ENCODE measurements at regions of chr19 and their contacts with region 1.

Region 1: DNA sequence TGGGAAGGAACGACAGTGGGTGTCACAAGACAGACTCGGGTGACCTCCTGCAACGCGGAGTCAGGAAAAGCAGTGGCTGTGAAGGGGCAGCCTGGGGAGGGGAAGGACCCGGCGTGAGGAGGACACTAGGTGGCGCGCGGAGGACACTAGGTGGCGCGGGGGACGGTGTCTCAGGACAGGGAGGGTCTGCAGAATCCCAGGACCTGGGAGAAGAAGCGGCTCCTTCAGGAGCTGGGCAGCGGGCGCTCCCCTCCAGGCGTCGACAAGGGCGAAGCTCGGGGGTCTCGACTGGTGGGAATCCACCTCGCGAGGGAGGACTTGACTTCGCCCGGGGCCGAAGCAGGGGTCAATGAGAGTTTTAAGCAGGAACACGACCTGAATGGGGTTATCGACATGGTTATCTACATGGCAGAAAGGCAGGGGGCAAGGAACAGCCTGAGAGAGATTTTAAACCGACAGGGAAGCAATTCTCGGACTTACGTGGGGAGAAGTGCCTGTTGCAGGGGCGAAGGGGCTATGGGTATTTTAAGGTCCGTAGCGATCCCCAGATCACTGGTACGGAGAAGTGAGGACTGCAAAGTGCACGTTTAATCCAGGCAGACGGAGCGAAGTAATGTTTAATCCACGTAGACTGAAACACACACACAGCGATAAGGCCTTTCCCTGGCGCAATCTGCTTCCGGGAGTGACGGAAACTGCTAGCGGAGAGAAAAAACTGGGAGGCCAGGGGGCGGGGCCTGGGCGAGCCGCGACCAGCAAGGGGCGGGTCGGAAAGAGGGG is at the start of gene ZNF616:
- DNase-seq: peak; percentile 33
- ATAC-seq: peak; percentile 96
- H3K4me3 ChIP-seq: peak within 1 kb of the TSS; percentile 95 to 99
- H3K27ac ChIP-seq: peak within 1 kb of the TSS; percentile 90
- H3K4me1 ChIP-seq: no peaks in the 10 kb centered on the region; the same call in 1 of the 2 replicates
- H3K27me3 ChIP-seq: no peaks in the 10 kb centered on the region
- CTCF ChIP-seq: peak; percentile 89
- total RNA-seq, gene ZNF616: 5.3 TPM

Region 2: DNA sequence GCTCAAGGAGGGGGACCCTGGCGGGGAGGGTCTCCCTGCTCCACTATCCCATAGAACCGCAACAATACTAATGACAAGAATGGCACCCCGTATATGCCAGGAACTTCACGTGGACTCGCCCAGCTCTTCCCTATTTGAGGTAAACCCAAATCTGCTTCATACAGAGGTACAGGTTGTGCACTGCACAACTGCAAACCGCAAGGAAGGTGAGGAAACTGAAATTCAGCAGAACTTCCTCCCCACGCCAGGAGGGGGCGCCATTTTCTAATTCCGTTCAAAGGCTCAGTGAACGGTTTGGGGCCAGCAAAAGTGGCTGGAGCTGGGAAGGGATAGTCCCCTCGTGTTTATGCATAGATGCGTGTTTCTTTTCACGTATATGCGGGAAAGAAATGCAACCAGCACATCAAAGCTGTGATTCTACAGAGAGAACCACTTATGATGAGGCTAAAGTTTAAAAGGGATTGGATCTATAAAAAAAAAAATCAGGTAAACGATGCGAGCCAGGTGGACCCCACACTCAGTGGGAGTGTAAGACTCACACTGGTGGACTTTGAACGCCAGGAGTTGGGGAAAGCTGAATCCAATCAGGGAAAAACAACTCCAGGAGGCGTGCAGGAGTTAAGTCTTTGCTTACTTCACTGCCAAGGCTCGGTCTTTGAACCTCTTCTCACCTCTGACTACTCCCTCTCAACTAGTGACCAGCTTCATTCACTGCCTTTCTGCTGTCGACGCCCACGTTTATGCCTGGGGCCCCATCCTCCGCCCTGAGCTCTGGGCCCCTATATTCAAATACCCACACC is 1469.9 kb before region 1 on chr19:
- CTCF ChIA-PET with region 1: no interaction called
- POLR2A ChIA-PET with region 1: no interaction called
- in situ Hi-C with region 1: no loop called
- intact Hi-C with region 1: no loop called
- DNase-seq: no peak
- ATAC-seq: peak; percentile 35; the same call in 1 of the 2 replicates
- H3K4me3 ChIP-seq: no peak overlapping the region
- H3K27ac ChIP-seq: no peak overlapping the region
- H3K4me1 ChIP-seq: no peaks in the 10 kb centered on the region
- H3K27me3 ChIP-seq: no peaks in the 10 kb centered on the region
- CTCF ChIP-seq: peak; percentile 83

Region 3: GRCh38 chr19:52237771-52238400 is 98.4 kb after region 1 on chr19:
- CTCF ChIA-PET with region 1: no interaction called
- POLR2A ChIA-PET with region 1: no interaction called
- in situ Hi-C with region 1: no loop called
- intact Hi-C with region 1: loop called (anchors 2 kb)
- DNase-seq: peak; percentile 47
- ATAC-seq: 0 out of 2 replicates have a peak, but pooled peaks have one; percentile 53
- H3K4me3 ChIP-seq: no peak overlapping the region
- H3K27ac ChIP-seq: no peak overlapping the region
- H3K4me1 ChIP-seq: no peaks in the 10 kb centered on the region
- H3K27me3 ChIP-seq: no peaks in the 10 kb centered on the region
- CTCF ChIP-seq: peak; percentile 83

Measured in Panc1 (cell line).